ENCODE measurements at regions of chr19 and their contacts with region 1.

Region 1: GRCh38 chr19:28633319-28634018 is 579.5 kb downstream of the UQCRFS1 start:
- DNase-seq: peak; percentile 68
- H3K4me3 Mint-ChIP-seq: no peak overlapping the region
- H3K27ac Mint-ChIP-seq: no peak overlapping the region
- H3K4me1 Mint-ChIP-seq: no peaks in the 10 kb centered on the region
- H3K27me3 Mint-ChIP-seq: no peaks in the 10 kb centered on the region
- CTCF ChIP-seq: peak; percentile 94

Region 2: DNA sequence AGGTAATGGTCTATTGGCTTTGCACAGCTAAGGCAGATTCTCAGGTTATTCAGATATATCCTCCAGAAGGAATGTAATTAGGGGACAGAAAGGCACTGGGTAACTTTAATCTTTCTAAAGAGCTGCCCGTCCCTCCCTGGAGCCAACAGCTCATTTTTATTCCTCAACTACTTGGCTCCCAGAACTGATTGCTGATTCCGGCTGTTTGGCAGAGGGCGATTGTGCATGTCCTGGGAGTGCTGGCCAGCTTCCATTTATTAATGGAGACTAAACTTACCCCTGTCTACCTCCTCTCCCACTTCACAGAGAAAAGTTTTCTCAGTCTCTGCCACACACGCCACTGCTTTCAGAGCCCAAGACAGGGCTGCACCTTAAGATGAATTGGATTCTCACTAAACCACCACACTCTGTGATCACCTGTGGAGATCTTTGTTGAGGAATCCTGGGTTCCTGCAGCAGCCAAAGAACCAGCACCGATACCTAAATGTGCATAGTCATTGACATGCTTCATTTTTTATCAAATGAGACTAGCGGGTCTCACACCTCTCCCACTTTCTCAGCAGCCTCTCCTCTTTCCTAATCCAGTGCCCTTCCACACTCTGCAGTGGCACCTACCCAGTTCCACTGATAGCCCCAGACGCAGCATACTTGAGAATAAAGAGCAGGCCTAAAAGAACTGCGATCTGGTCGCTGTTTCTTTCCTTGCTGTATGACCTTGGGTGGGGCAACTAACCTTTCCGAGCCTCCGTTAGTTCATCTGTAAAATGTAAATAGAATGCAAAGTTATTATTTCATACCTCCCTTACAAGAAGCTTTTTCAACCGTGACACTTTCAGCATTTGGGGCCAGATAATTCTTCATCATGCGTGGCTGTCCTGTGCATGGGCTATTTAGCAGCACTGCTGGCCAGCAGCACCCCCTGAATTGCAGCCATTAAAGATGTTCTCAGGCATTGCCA is 69.2 kb before region 1 on chr19:
- CTCF ChIA-PET with region 1: no interaction called
- intact Hi-C with region 1: loop called (anchors 2 kb)
- DNase-seq: no peak
- H3K4me3 Mint-ChIP-seq: no peak overlapping the region
- H3K27ac Mint-ChIP-seq: no peak overlapping the region
- H3K4me1 Mint-ChIP-seq: no peaks in the 10 kb centered on the region
- H3K27me3 Mint-ChIP-seq: peaks cover 23% of the 10 kb centered on the region
- CTCF ChIP-seq: no peak

Region 3: DNA sequence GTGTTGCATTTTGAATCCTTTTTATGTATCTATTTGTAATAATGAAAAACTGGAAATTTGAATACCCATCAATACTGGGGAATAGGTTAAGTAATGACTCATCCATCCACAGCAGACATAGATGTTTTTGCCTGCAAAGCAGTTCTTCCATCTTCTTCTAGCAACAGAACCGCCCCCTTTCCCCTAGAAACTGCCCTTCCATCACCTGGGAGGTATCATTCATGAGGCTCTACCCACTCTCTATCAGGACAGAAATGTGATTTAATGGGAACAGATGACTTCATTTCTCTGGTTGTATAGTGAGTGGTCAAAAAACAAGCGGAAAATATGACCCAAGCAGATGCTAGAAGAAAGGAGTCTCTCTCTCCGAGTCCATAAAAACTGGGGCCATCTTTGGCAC is 46.6 kb after region 1 on chr19:
- CTCF ChIA-PET with region 1: no interaction called
- intact Hi-C with region 1: no loop called
- DNase-seq: no peak
- H3K4me3 Mint-ChIP-seq: no peak overlapping the region
- H3K27ac Mint-ChIP-seq: no peak overlapping the region
- H3K4me1 Mint-ChIP-seq: no peaks in the 10 kb centered on the region
- H3K27me3 Mint-ChIP-seq: peaks cover 10% of the 10 kb centered on the region
- CTCF ChIP-seq: no peak

Region 4: DNA sequence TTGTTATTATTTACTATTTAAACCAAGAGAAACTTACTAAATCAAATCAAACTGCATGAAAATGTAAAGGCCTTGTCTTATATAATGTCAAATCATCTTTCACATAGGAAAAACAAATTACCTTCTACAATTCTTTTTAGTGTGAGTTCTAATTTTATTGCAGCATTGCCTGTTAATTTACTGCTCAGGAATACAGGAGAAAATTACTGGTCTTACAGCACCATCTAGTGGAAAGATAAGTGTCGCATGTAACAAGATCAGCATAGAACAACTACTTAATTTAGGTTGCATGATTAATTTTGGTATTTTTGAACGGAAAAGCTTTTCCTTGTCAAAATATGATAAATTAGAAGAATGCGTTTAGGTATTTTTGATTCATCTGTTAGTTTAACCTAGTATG is 76.8 kb after region 1 on chr19:
- CTCF ChIA-PET with region 1: no interaction called
- intact Hi-C with region 1: loop called (anchors 1 kb)
- DNase-seq: peak; percentile 14
- H3K4me3 Mint-ChIP-seq: no peak overlapping the region
- H3K27ac Mint-ChIP-seq: no peak overlapping the region
- H3K4me1 Mint-ChIP-seq: peaks cover 13% of the 10 kb centered on the region
- H3K27me3 Mint-ChIP-seq: no peaks in the 10 kb centered on the region
- CTCF ChIP-seq: no peak

Region 5: GRCh38 chr19:28905996-28906395 is 272.5 kb after region 1 on chr19:
- CTCF ChIA-PET with region 1: no interaction called
- intact Hi-C with region 1: no loop called
- DNase-seq: no peak
- H3K4me3 Mint-ChIP-seq: no peak overlapping the region
- H3K27ac Mint-ChIP-seq: no peak overlapping the region
- H3K4me1 Mint-ChIP-seq: no peaks in the 10 kb centered on the region
- H3K27me3 Mint-ChIP-seq: no peaks in the 10 kb centered on the region
- CTCF ChIP-seq: no peak